ENCODE measurements at regions of chr11 and their contacts with region 1.

Region 1: DNA sequence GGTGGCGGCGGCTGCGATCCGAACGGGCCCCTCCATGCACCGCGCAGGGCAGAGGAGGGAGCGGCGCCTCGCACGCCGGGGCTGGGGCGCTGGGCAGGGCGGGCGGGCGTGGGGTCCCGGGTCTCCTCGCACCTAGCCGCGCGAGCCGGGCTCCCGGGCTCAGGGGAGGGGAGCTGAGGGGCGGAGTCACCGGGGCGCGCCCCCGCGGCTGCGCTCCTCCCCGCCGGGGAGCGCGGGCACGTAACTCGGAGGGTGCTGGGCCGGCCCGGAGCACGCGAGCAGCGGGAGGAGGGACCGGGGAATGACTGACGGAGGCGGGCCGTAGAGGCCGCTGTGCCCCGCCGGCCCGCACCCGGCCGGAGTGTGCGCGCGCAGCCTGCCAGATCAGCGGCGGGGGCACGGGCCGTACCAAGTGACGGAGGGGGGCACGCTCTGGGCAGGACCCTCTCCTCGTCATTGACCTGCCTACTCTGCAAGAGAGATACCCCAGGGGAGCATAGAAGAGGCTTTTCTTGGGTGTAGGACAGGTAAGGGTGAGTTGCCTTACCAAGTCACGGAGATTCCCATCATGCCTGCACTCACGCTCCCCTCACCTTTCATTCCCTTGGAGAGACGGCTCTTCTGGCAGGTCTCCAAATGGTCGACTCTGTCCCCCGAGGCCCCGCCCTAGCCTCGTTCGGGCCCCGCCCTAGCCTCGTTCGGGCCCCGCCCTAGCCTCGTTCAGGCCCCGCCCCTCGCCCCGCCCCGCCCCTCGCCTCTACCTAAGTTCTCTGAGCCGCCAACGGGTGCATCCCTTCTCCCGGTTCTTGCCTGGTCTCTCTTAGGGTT is at the start of gene CDON:
- DNase-seq: peak; percentile 92
- H3K4me3 Mint-ChIP-seq: peak within 1 kb of the TSS; percentile 77
- H3K27ac Mint-ChIP-seq: peak within 1 kb of the TSS; percentile 92
- H3K4me1 Mint-ChIP-seq: peaks cover 5% of the 10 kb centered on the region
- H3K27me3 Mint-ChIP-seq: peaks cover 17% of the 10 kb centered on the region
- total RNA-seq, gene CDON: 2.6 to 3.5 TPM

Region 2: DNA sequence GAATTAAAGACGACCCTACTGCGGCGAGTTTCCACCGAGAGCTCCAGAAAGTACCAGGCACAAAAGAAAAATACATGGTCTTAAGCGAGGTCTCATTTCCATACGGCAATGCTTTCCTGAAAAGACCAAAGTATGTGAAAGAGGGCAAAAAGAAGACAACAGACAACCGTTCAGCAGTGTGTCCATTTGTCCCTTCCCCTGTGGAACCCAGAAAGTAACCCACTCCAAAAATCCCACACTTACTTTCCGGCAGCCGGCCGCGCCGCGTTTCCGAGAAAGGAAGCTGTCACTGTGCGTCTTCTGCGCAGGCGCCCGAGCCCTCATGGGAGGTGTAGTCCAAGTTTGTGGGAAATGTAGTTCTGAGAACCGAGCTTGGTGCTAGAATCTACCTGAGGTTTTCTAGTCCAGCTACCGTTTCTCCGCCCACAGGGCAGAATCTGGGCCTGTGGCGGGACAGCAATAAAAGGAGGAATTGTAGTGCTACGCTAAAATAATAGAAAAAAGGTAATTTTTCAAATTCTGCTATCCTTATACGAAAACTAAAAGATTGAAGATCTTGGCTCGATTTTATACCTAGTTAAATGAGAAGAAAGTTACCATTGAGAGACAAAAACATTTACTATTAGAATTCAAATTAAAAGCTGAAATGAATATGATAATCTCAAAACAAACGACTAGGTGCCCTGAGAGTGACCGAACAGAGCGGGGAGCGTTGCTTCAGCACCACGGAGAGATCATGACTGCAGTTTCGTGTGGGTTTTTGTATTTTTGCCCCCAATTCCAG is 159.8 kb before region 1 on chr11 and contains the start of gene PUS3:
- CTCF ChIA-PET with region 1: interaction called, 4 read pairs
- intact Hi-C with region 1: loop called (anchors 1 kb)
- DNase-seq: peak; percentile 93
- H3K4me3 Mint-ChIP-seq: peak within 1 kb of the TSS; percentile 94
- H3K27ac Mint-ChIP-seq: peak within 1 kb of the TSS; percentile 95
- H3K4me1 Mint-ChIP-seq: peaks cover 37% of the 10 kb centered on the region
- H3K27me3 Mint-ChIP-seq: peaks cover 22% of the 10 kb centered on the region
- total RNA-seq, gene PUS3: 14.9 to 18.5 TPM

Region 3: GRCh38 chr11:125941619-125942611 is 121.0 kb before region 1 on chr11:
- CTCF ChIA-PET with region 1: interaction called, 5 read pairs
- intact Hi-C with region 1: loop called (anchors 5 kb)
- DNase-seq: peak; percentile 79
- H3K4me3 Mint-ChIP-seq: no peak overlapping the region
- H3K27ac Mint-ChIP-seq: no peak overlapping the region
- H3K4me1 Mint-ChIP-seq: peaks cover 15% of the 10 kb centered on the region
- H3K27me3 Mint-ChIP-seq: no peaks in the 10 kb centered on the region

Region 4: GRCh38 chr11:126083829-126084607 is 21.1 kb after region 1 on chr11:
- CTCF ChIA-PET with region 1: interaction called, 3 read pairs
- intact Hi-C with region 1: loop called (anchors 1 kb)
- DNase-seq: peak; percentile 68
- H3K4me3 Mint-ChIP-seq: peak overlapping the region; percentile 16
- H3K27ac Mint-ChIP-seq: peak overlapping the region; percentile 74
- H3K4me1 Mint-ChIP-seq: peaks cover 26% of the 10 kb centered on the region
- H3K27me3 Mint-ChIP-seq: no peaks in the 10 kb centered on the region

Region 5: DNA sequence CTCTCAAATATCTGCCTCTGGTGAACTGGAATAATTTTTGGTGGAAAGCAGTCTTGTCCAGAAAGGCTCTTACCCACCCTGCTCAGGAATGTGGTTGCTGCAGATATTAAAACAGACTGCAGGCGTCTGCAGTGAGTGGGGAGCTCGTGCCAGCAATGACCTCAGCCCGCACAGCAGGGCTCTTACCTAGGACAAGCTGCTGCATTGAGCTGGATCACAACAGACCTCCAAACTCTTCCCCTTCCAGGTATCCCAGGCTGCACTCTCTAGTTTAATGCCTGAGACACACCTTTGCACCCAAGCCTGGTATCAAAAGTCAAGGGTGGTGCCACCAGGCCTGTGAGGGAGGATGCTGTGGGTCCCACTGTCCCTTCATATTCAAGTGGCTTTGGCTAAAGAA is 69.4 kb after region 1 on chr11:
- CTCF ChIA-PET with region 1: no interaction called
- intact Hi-C with region 1: no loop called
- DNase-seq: no peak
- H3K4me3 Mint-ChIP-seq: no peak overlapping the region
- H3K27ac Mint-ChIP-seq: no peak overlapping the region
- H3K4me1 Mint-ChIP-seq: no peaks in the 10 kb centered on the region
- H3K27me3 Mint-ChIP-seq: no peaks in the 10 kb centered on the region

Region 6: DNA sequence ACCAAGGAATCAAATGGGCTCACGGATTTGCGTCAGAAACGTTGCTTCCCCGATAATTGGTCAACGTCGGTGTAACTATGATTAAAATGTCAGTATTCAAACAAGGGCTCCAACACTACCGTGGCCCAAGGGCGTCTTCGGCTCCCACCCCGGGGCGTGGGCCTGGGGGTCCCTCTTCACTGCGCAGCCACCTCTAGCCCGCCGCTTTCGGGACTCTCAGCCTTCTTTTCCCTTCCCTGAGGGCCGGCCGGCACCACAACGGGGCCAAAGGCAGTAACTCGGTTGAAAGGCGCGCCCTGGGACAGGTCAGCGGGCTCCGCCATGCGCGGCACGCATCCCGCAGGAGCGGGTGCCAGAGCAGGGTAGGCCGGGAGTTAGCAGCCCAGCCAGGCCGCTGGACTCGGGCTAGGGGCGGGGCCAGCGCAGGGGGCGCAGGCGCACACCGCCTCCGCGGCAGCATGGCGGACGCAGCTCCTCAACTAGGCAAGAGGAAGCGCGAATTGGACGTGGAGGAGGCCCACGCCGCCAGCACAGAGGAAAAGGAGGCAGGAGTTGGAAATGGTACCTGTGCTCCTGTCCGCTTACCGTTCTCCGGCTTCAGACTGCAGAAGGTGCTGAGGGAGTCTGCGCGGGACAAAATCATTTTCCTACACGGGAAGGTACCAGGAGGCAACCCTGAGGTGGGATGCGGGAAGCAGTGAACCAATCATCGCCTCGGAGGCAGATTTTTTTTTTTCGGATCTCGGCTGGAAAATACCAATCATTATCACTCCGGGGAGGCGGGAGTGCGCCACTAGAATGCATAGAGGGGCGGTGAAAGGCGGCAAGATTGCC is 240.9 kb after region 1 on chr11 and contains the start of gene DCPS:
- CTCF ChIA-PET with region 1: no interaction called
- intact Hi-C with region 1: loop called (anchors 1 kb)
- DNase-seq: peak; percentile 86
- H3K4me3 Mint-ChIP-seq: peak within 1 kb of the TSS; percentile 95
- H3K27ac Mint-ChIP-seq: peak within 1 kb of the TSS; percentile 97
- H3K4me1 Mint-ChIP-seq: peaks cover 35% of the 10 kb centered on the region
- H3K27me3 Mint-ChIP-seq: no peaks in the 10 kb centered on the region
- total RNA-seq, gene DCPS: 34.9 to 39.5 TPM